MCF 10A (cell line): ENCODE measurements at regions of chr9 and their contacts with region 1.

Region 1: DNA sequence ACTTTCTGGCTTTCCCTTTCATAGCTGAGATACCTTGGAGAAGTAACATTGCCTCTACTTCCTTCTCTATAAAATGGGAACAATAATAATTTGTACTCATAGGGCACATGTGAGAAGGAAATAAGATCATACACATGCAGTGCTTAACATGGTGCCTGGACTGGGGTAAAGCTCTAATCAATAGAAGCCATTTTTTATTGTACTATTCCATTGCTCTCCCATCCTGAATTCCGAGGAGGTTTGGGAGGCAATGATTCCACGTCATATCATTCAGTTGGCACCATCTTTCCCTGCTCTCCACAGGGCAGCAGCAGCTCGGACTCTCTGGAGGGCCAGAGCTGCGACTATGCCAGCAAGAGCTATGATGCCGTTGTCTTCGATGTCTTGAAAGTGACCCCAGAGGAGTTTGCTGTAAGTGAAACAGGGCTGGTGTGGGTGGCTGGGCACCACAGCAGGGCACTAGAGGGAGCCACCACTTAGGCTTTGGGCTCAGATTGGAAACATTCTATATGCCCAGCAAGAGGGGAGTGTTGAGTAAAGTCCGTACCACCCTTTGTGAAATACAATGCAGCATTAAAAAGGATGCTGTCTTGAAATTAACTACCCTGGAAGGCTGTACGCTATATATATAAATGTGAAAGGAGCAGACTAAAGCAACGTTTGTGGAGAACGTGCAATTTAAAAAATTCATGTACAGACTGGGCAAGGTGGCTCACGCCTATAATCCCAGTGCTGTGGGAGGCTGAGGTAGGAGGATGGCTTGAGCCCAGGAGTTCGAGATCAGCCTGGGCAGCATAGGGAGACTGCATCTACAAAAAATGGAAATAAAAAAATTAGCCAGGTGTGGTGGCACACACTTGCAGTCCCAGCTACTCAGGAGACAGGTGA is 51.2 kb downstream of the RALGPS1 start:
- DNase-seq: peak; percentile 63
- H3K4me3 Mint-ChIP-seq: no peak overlapping the region
- H3K27ac Mint-ChIP-seq: no peak overlapping the region
- H3K4me1 Mint-ChIP-seq: peaks cover 7% of the 10 kb centered on the region
- H3K27me3 Mint-ChIP-seq: no peaks in the 10 kb centered on the region
- CTCF ChIP-seq: peak; percentile 82

Region 2: GRCh38 chr9:126752376-126752775 is 213.4 kb before region 1 on chr9:
- CTCF ChIA-PET with region 1: no interaction called
- POLR2A ChIA-PET with region 1: no interaction called
- intact Hi-C with region 1: no loop called
- DNase-seq: peak; percentile 4
- H3K4me3 Mint-ChIP-seq: no peak overlapping the region
- H3K27ac Mint-ChIP-seq: no peak overlapping the region
- H3K4me1 Mint-ChIP-seq: peaks cover 10% of the 10 kb centered on the region
- H3K27me3 Mint-ChIP-seq: peaks cover 43% of the 10 kb centered on the region
- CTCF ChIP-seq: no peak

Region 3: DNA sequence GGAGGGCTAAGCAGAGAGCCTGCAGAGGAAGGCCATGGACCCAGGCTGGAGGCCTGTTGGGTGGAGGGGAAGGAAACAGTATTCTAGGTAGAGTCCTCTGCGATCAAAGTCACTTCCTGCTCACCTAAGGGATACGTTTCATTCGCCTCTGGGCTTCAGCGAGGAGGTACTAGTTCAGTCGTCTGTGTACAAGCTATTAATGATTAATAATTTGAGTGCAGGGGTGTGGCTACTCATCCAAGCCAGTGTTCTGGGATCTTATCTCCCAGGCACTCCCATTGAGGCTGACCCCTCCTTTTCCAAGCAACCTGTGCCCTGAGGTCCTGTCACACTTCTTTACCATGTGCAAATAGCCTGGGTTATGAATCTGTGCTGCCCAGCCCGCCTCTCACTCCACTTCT is 26.0 kb before region 1 on chr9:
- CTCF ChIA-PET with region 1: interaction called, 15 read pairs
- POLR2A ChIA-PET with region 1: no interaction called
- intact Hi-C with region 1: loop called (anchors 1 kb)
- DNase-seq: no peak
- H3K4me3 Mint-ChIP-seq: no peak overlapping the region
- H3K27ac Mint-ChIP-seq: no peak overlapping the region
- H3K4me1 Mint-ChIP-seq: no peaks in the 10 kb centered on the region
- H3K27me3 Mint-ChIP-seq: peaks cover 25% of the 10 kb centered on the region
- CTCF ChIP-seq: no peak

Region 4: DNA sequence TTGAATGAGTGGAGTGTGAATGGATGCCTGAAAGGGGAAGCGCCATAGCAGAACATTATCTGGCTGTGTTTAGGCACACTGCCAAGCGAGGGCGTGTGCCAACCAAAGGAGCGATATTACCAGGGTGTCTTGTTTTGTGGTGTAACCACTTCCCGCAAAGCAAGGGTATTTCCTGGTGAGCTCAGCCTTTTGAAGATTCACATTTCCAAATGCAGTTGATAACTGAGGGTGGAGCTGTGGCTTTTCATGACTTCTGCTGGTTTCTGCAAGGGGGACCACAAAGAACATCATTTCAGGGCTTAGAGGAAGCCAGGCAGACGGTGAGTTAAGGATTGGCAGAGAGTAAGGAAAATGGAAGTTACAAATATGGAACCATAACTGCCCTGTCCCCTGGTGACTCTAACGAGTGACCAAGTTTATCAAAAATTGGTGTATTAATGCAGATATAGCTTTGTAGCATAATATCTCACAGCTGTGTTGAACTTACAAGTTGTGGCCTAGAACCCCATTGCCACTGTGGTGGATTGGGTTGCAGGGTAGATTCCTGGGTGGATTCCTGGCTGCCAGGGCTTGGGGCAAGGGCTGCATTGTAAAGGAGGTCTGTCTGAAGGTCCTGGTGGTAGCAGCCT is 20.2 kb after region 1 on chr9:
- CTCF ChIA-PET with region 1: interaction called, 12 read pairs
- POLR2A ChIA-PET with region 1: interaction called, 4 read pairs
- intact Hi-C with region 1: no loop called
- DNase-seq: peak; percentile 97
- H3K4me3 Mint-ChIP-seq: peak overlapping the region; percentile 9
- H3K27ac Mint-ChIP-seq: peak overlapping the region; percentile 67
- H3K4me1 Mint-ChIP-seq: peaks cover 37% of the 10 kb centered on the region
- H3K27me3 Mint-ChIP-seq: peaks cover 61% of the 10 kb centered on the region
- CTCF ChIP-seq: no peak

Region 5: GRCh38 chr9:127192744-127193143 is 227.0 kb after region 1 on chr9:
- CTCF ChIA-PET with region 1: interaction called, 107 read pairs
- POLR2A ChIA-PET with region 1: interaction called, 4 read pairs
- intact Hi-C with region 1: no loop called
- DNase-seq: no peak
- H3K4me3 Mint-ChIP-seq: no peak overlapping the region
- H3K27ac Mint-ChIP-seq: no peak overlapping the region
- H3K4me1 Mint-ChIP-seq: peaks cover 4% of the 10 kb centered on the region
- H3K27me3 Mint-ChIP-seq: peaks cover 36% of the 10 kb centered on the region
- CTCF ChIP-seq: no peak

Region 6: DNA sequence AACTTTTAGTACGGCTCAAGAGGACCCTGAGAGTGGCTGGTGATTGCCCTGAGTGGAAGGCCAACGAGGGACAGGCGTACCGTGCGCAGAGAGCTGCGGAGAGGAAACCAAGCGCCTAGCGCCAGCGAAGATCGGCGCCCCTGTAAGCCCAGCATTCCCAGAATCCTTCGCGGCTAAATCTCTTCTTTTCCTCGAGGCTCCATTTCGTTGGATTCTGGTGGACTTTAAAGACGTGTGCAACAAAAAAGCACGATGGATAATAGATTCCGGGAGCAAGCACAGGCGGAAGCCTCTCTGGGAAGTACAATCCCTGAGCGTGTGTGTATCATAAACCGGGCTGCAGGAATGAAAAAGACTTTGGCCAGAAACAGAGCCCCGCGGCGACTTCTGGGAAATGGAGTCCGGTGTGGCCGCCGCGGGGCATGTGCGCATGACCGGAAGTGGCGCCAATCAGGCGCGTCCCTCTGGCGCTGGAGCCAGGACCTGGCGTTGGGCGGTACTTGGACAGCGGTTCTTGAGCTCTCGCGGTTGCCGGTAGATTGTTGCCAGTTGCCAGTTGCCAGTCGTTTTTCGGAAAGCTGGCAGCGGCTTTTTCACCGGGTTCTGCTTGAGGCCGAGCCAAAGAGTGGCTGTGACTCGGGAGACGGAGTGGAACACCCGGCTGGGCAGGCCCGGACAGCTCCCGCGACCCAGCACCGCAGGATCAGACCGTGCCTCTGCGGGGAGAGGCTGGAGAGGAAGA is 458.3 kb after region 1 on chr9 and contains the start of gene ZNF79:
- CTCF ChIA-PET with region 1: no interaction called
- POLR2A ChIA-PET with region 1: no interaction called
- intact Hi-C with region 1: no loop called
- DNase-seq: peak; percentile 92
- H3K4me3 Mint-ChIP-seq: peak within 1 kb of the TSS; percentile 99
- H3K27ac Mint-ChIP-seq: peak within 1 kb of the TSS; percentile 98
- H3K4me1 Mint-ChIP-seq: peaks cover 21% of the 10 kb centered on the region
- H3K27me3 Mint-ChIP-seq: no peaks in the 10 kb centered on the region
- CTCF ChIP-seq: no peak
- total RNA-seq, gene ZNF79: 7.9 and 9.3 TPM in 2 replicates